ENCODE measurements at regions of chr5 and their contacts with region 1.

Region 1: DNA sequence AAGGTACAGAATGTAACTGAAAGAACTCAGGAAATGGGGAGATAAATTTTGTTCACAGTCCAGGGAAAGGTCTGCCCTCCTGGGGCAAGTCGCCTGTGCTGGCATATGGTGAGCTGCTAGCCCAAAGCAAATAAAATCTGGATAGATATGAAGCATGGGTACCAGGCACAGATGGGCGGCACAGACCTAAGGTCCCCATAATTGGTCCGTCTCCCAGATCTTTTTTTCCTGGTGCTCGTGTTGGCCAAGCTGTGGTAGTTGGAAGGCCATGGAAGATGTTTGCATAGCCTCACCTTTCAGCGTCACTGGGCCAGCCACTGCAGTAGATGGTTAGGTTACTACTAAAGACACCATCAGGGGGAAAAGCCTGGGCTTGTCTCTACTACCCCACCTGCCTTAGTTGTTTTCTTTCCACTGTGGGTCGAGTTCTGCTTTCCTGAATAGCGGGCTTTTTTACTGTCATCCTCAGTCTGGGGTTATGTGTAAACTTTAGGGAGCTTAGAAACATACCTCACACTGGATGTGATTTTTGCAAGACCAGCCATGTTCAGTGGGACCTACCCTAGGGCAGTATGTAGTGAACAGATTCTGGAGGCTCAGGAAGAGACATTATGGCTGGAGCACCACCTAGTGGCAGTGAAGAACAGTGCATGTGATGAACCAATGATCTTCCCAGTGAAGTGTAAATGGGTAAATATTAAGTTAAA is 24.2 kb upstream of the GLRX start:
- DNase-seq: no peak
- H3K4me3 ChIP-seq: no peak overlapping the region
- H3K27ac ChIP-seq: no peak overlapping the region
- H3K4me1 ChIP-seq: peaks cover 6 to 30% (median 16%) of the 10 kb centered on the region in 6 donors
- H3K27me3 ChIP-seq: no peaks in the 10 kb centered on the region
- CTCF ChIP-seq: peak; percentile 81 to 96 (median 92)
- POLR2A ChIP-seq: no peak

Region 2: GRCh38 chr5:95646554-95647431 is 199.9 kb before region 1 on chr5 and contains the start of gene RFESD:
- intact Hi-C with region 1: loop called (anchors 5 kb)
- DNase-seq: peak; percentile 100
- H3K4me3 ChIP-seq: peak within 1 kb of the TSS; percentile 39 to 67 (median 50)
- H3K27ac ChIP-seq: peak within 1 kb of the TSS; percentile 89 to 95 (median 94)
- H3K4me1 ChIP-seq: peaks cover 11 to 42% (median 24%) of the 10 kb centered on the region in 6 donors
- H3K27me3 ChIP-seq: no peaks in the 10 kb centered on the region
- CTCF ChIP-seq: peak in 5 of 11 experiments; percentile 29 to 58 (median 41)
- POLR2A ChIP-seq: peak; percentile 33 to 93 (median 80)
- total RNA-seq, gene RFESD: 2.2 to 6.5 (median 3.6) TPM

Region 3: GRCh38 chr5:95664204-95664786 is 182.4 kb before region 1 on chr5:
- intact Hi-C with region 1: loop called (anchors 5 kb)
- DNase-seq: no peak
- H3K4me3 ChIP-seq: no peak overlapping the region
- H3K27ac ChIP-seq: no peak overlapping the region
- H3K4me1 ChIP-seq: peaks cover 0 to 18% (median 6%) of the 10 kb centered on the region in 6 donors
- H3K27me3 ChIP-seq: no peaks in the 10 kb centered on the region
- CTCF ChIP-seq: peak; percentile 39 to 78 (median 71)
- POLR2A ChIP-seq: no peak

Region 4: GRCh38 chr5:95783661-95784060 is 63.0 kb before region 1 on chr5:
- intact Hi-C with region 1: loop called (anchors 2 kb)
- DNase-seq: no peak
- H3K4me3 ChIP-seq: no peak overlapping the region
- H3K27ac ChIP-seq: no peak overlapping the region
- H3K4me1 ChIP-seq: peaks cover 4 to 35% (median 16%) of the 10 kb centered on the region in 6 donors
- H3K27me3 ChIP-seq: no peaks in the 10 kb centered on the region
- CTCF ChIP-seq: no peak
- POLR2A ChIP-seq: no peak

Measured in spleen (tissue), 13 donors.